Prostate gland (tissue), 2 donors: ENCODE measurements at regions of chr3 and their contacts with region 1.

Region 1: DNA sequence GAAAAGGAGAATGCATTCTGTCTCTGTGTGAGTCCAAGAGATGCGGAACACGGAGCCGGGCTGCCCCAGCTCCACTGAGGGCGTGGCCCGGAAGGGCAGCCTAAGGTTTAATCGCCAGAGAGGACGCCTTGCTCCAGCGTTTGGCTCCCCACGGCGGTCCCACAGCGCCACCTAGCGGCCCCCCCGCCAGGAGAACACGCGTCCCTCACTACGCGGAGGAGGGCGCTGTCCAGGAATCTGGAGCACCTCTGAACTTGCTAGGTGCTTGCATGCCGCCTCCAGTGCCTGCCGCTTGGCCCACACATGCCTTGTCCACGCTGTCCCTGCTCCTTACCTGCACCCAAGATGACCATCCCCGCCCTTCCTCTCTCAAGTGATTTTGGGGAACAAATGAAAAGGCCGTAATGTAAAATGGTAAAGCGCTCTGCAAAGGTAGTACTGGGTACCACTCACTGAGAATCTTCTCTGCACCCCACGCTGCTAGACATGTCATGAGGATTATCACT is 14.4 kb upstream of the MRPS22 start:
- DNase-seq: peak; percentile 76
- H3K4me3 ChIP-seq: no peak overlapping the region
- H3K27ac ChIP-seq: no peak overlapping the region
- H3K4me1 ChIP-seq: no peaks in the 10 kb centered on the region
- H3K27me3 ChIP-seq: no peaks in the 10 kb centered on the region
- CTCF ChIP-seq: peak; percentile 95 to 99 (median 97)
- POLR2A ChIP-seq: no peak

Region 2: DNA sequence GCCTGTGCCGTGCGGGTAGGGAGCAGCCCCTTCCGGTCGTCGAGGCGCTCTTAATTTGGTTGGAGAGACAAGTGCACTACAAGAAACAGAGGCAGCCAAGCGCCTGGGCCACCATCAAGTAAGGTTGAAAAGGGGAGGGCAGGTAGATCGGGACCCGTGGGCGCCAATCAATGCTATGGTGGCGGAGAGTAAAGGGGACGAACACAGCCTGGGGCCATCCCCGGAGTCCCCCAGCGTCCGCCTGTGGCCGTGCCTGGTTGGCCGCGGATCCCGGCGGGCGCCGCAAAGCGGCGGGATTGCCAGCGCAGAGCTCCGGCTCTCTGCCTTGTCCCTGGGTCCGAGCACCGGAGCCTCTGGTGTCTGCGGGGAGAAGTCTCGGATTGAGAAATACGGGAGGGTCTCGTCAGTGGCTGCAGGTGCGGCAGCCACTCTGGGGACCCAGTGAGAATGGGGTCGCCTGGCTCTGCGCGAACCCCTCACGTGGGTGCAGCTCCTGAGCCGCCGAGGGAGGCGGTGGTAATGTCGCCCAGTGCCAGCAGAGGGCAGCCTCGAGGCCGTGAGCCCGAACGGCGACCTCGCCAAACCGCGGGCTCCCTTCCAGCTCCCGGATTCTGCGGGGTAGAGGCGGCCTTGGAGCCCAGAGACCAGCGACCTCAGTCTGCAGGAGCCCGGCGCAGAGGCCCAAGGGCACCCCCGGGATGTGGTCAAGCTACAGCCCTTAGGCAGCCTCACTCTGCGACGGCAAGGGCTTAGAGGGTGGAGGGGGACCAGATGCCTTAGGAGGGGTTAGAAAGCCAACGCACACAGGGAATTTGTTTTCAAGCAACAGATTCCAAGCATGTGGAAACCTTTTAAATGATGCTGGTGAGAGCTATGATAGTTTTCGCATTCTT is 393.3 kb before region 1 on chr3:
- intact Hi-C with region 1: loop called (anchors 5 kb)
- DNase-seq: peak; percentile 40
- H3K4me3 ChIP-seq: peak overlapping the region in 1 of 2 donors; percentile 28
- H3K27ac ChIP-seq: no peak overlapping the region
- H3K4me1 ChIP-seq: peaks cover 13% of the 10 kb centered on the region
- H3K27me3 ChIP-seq: peaks cover 45% of the 10 kb centered on the region
- CTCF ChIP-seq: peak; percentile 71 to 85 (median 79)
- POLR2A ChIP-seq: no peak

Region 3: GRCh38 chr3:139111392-139112229 is 217.8 kb before region 1 on chr3:
- intact Hi-C with region 1: loop called (anchors 2 kb)
- DNase-seq: peak; percentile 39
- H3K4me3 ChIP-seq: no peak overlapping the region
- H3K27ac ChIP-seq: no peak overlapping the region
- H3K4me1 ChIP-seq: no peaks in the 10 kb centered on the region
- H3K27me3 ChIP-seq: no peaks in the 10 kb centered on the region
- CTCF ChIP-seq: peak; percentile 49 to 78 (median 66)
- POLR2A ChIP-seq: no peak